Right ventricle myocardium superior (tissue), 1 donor: ENCODE measurements at regions of chr1 and their contacts with region 1.

Region 1: DNA sequence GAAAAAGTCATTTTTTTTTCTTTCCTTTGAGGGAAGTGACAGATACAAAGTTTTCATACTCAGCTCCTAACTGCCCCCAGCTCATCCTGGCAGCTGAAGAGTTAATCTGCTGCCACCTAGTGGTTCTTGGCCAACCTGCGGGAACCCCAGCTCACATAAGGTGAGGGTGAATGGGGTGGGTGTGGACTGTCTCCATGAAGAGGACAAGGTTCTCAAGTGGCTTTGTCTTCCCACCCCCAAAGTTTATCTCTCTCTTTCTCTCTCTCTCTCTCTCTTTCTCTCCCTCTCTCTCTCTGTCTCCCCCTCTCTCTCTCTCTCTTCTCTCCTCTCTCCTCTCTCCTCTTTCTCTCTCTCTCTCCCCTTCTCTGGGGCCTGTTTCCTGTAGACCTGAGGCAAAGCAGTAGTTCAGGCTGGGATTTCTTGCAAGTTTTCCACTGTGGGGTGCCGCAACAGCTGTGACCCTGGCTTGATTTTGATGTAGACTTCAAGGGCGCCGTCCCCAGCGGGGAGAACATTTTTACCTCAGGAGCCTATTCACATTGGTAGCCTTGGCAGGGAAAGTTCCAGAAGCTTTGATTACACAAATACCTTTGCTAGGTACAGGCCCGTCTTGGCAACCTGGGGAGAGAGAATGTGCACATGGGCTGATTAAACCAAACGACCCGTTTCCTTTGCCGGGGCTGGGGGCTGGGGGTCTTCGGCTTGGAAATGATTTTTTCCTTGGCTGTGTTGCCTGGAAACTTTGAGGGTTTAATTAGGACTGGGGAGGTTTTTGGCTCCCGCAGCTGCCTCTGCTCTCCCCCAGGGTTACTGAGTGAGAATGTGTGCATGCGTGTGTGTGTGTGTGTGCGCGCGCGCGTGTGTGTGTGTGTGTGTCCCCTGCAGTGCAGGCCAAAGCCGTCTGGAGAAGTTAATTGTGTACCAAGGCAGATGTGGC is 135.9 kb downstream of the TM2D1 start:
- DNase-seq: peak; percentile 49
- ATAC-seq: peak; percentile 91

Region 2: GRCh38 chr1:61481313-61481712 is 107.7 kb before region 1 on chr1:
- intact Hi-C with region 1: loop called (anchors 10 kb)
- DNase-seq: no peak
- ATAC-seq: no peak